ENCODE measurements at regions of chr19 and their contacts with region 1.

Region 1: DNA sequence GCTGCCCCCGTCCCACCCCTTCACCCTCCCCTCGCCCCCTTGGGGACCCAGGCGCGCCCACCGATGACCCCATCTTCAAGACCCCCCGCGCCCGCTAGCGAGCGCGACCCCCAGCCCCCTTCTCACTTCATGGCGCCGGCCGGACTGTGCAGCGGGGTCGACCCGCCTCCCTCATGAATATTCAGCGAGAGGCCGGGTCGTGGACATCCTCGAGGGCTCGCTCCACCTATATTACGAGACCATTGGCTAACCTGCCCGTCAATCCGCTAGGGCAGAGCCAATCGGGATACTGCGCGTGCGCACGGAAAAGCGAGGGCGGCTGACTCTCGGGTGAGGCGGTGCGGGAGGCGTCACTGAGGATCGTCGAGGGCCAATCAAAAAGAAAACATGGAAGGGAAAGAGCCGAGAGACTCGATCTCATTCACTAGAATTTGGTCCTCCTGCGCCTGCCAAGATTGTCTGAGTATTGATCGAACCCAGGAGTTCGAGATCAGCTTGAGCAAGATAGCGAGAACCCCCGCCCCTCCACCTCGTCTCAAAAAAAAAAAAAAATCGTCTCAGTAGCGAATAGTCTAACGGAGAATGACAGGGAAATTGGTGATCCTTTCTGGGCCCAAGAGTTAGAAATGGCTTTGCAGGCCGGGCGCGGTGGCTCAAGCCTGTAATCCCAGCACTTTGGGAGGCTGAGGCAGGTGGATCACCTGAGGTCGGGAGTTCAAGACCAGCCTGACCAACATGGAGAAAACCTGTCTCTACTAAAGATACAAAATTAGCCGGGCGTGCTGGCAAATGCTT is at the start of gene ERCC2:
- DNase-seq: peak; percentile 95 to 99 (median 98)
- H3K4me3 ChIP-seq: peak within 1 kb of the TSS; percentile 60 to 98 (median 90)
- H3K27ac ChIP-seq: peak within 1 kb of the TSS in 52 of 59 donors; percentile 8 to 88 (median 76)
- H3K27me3 ChIP-seq: no peaks in the 10 kb centered on the region
- CTCF ChIP-seq: peak in 12 of 56 donors; percentile 1 to 33 (median 20)
- total RNA-seq, gene ERCC2: 17.0 to 43.9 (median 26.6) TPM

Region 2: GRCh38 chr19:45161738-45162607 is 208.6 kb before region 1 on chr19:
- intact Hi-C with region 1: no loop called
- DNase-seq: no peak
- H3K4me3 ChIP-seq: no peak overlapping the region
- H3K27ac ChIP-seq: no peak overlapping the region
- H3K27me3 ChIP-seq: peaks cover 0 to 13% (median 0%) of the 10 kb centered on the region in 45 donors
- CTCF ChIP-seq: peak in 30 of 56 donors; percentile 12 to 60 (median 28)

Region 3: DNA sequence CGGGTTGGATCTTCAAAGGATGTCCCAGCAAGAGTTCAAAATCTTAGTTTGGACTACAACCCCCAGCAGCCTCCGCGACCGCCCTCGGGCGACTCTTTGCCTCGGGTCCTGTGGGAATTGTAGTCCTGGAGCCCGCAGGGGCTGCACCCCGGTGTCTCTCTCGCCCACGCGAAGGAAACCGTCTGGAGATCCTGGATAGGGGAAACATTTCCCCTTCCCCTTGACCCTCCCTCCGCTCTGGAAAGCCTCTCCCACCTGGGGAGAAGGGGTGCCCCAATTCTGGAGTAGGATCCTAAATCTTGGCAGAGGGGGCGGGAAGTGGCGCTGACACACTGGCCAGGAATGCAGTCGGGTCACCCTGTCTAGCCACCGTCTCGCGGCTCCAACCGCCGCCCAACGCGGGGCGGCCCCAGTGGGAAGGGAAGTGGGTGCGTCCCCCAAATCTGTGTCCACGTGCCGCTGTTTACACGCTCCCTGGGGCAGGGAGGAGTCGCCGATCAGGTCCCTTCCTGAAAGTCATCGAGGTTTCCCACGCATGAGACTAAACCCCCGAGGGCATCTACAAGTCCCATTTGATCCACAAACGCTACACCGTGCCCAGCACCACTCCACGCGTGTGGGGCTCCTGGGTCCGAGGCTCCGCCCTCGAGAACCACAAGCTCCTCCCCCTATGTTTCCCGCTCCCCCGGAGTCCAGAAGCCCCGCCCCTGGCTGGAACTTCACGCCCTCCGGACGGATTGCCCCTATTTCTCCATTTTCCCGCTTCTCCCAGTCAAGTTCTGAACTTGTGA is 35.0 kb after region 1 on chr19:
- intact Hi-C with region 1: loop called in 1 of 2 experiments (anchors 5 kb)
- DNase-seq: peak; percentile 81 to 93 (median 90)
- H3K4me3 ChIP-seq: peak overlapping the region; percentile 59 to 98 (median 83)
- H3K27ac ChIP-seq: peak overlapping the region; percentile 57 to 98 (median 90)
- H3K27me3 ChIP-seq: peaks cover 0 to 27% (median 9%) of the 10 kb centered on the region in 45 donors
- CTCF ChIP-seq: peak in 6 of 56 donors; percentile 14 to 25 (median 18)

Measured in dorsolateral prefrontal cortex (tissue), 120 donors.